Activated CD4-positive, alpha-beta T cell treated with anti-CD3 and anti-CD28 coated beads for 36 hours (primary cell): ENCODE measurements at regions of chr3 and their contacts with region 1.

Region 1: GRCh38 chr3:160565442-160566403 is at the start of gene KPNA4:
- DNase-seq: peak; percentile 98
- ATAC-seq: peak; percentile 93
- H3K4me3 Mint-ChIP-seq: peak within 1 kb of the TSS; percentile 95
- H3K27ac Mint-ChIP-seq: peak within 1 kb of the TSS; percentile 96
- H3K4me1 Mint-ChIP-seq: peaks cover 43% of the 10 kb centered on the region
- H3K27me3 Mint-ChIP-seq: no peaks in the 10 kb centered on the region
- total RNA-seq, gene KPNA4: 57.0 to 68.5 TPM

Region 2: GRCh38 chr3:158801696-158802408 is 1763.9 kb before region 1 on chr3 and contains the start of gene MFSD1:
- CTCF ChIA-PET with region 1: no interaction called
- POLR2A ChIA-PET with region 1: no interaction called
- intact Hi-C with region 1: loop called in 1 of 2 experiments (anchors 10 kb)
- DNase-seq: peak; percentile 94
- ATAC-seq: peak; percentile 92
- H3K4me3 Mint-ChIP-seq: peak within 1 kb of the TSS; percentile 81
- H3K27ac Mint-ChIP-seq: peak within 1 kb of the TSS; percentile 87
- H3K4me1 Mint-ChIP-seq: peaks cover 22% of the 10 kb centered on the region
- H3K27me3 Mint-ChIP-seq: no peaks in the 10 kb centered on the region
- total RNA-seq, gene MFSD1: 6.9 to 13.1 TPM

Region 3: GRCh38 chr3:159988617-159989271 is 577.0 kb before region 1 on chr3 and contains the start of gene IL12A:
- CTCF ChIA-PET with region 1: no interaction called
- POLR2A ChIA-PET with region 1: no interaction called
- intact Hi-C with region 1: no loop called
- DNase-seq: peak; percentile 88
- ATAC-seq: peak; percentile 95
- H3K4me3 Mint-ChIP-seq: peak within 1 kb of the TSS; percentile 52
- H3K27ac Mint-ChIP-seq: peak within 1 kb of the TSS; percentile 44
- H3K4me1 Mint-ChIP-seq: peaks cover 21% of the 10 kb centered on the region
- H3K27me3 Mint-ChIP-seq: peaks cover 13% of the 10 kb centered on the region
- total RNA-seq, gene IL12A: not detected

Region 4: GRCh38 chr3:160449636-160450598 is 115.8 kb before region 1 on chr3 and contains the start of gene TRIM59:
- CTCF ChIA-PET with region 1: no interaction called
- POLR2A ChIA-PET with region 1: interaction called, 5 read pairs
- intact Hi-C with region 1: loop called (anchors 1 kb)
- DNase-seq: peak; percentile 99
- ATAC-seq: peak; percentile 95
- H3K4me3 Mint-ChIP-seq: peak within 1 kb of the TSS; percentile 97
- H3K27ac Mint-ChIP-seq: peak within 1 kb of the TSS; percentile 96
- H3K4me1 Mint-ChIP-seq: peaks cover 20% of the 10 kb centered on the region
- H3K27me3 Mint-ChIP-seq: no peaks in the 10 kb centered on the region
- total RNA-seq, gene TRIM59: 32.5 to 42.2 TPM

Region 5: DNA sequence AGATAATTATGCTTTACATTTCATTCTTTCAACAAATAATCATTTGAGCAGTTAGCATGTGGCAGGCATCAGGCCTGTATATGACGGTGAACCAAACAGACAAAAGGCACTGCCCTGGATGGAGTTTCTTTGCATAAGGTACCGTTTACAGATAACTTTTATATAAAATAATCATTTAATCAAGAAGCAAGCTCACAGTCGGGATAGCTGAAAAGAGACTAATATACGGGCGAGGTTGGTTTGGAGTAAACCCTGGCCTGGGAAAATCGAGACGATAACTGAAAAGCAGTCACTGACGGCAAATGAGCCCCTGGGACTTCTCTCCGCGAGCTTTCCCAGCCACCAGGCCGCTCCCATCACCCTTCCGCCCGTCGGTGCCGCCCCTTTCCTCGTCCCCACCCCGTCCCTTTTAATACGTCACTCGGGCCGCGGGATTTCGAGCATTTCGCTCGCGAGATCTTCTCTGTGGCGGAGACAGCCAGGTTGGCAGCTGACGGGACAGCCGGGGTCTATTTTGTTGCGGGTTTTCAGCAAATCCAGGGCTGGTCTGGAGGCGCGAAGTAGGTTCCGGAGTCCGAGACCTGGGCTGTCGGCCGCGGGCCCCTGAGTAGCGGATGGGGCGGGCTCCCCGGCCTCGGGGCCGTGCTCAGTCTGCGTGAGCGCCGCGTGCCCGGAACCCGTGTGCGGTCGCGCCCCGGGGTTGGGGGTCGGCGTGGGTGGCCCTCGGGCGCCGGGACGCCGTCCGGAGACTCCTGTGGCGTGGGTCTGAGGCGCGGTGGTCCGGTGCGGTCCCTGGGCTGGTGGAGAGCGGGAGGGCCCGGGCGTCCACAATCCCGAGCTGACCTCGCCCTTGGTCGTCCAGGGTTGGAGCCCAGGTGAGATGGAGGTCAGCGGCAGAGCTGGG is 655.4 kb after region 1 on chr3 and contains the start of gene NMD3:
- CTCF ChIA-PET with region 1: no interaction called
- POLR2A ChIA-PET with region 1: no interaction called
- intact Hi-C with region 1: loop called in 1 of 2 experiments (anchors 1 kb)
- DNase-seq: peak; percentile 97
- ATAC-seq: peak; percentile 98
- H3K4me3 Mint-ChIP-seq: peak within 1 kb of the TSS; percentile 86
- H3K27ac Mint-ChIP-seq: peak within 1 kb of the TSS; percentile 88
- H3K4me1 Mint-ChIP-seq: peaks cover 26% of the 10 kb centered on the region
- H3K27me3 Mint-ChIP-seq: peaks cover 4% of the 10 kb centered on the region
- total RNA-seq, gene NMD3: 49.6 to 65.5 TPM